Endothelial cell of umbilical vein (primary cell): ENCODE measurements at regions of chr5 and their contacts with region 1.

Region 1: DNA sequence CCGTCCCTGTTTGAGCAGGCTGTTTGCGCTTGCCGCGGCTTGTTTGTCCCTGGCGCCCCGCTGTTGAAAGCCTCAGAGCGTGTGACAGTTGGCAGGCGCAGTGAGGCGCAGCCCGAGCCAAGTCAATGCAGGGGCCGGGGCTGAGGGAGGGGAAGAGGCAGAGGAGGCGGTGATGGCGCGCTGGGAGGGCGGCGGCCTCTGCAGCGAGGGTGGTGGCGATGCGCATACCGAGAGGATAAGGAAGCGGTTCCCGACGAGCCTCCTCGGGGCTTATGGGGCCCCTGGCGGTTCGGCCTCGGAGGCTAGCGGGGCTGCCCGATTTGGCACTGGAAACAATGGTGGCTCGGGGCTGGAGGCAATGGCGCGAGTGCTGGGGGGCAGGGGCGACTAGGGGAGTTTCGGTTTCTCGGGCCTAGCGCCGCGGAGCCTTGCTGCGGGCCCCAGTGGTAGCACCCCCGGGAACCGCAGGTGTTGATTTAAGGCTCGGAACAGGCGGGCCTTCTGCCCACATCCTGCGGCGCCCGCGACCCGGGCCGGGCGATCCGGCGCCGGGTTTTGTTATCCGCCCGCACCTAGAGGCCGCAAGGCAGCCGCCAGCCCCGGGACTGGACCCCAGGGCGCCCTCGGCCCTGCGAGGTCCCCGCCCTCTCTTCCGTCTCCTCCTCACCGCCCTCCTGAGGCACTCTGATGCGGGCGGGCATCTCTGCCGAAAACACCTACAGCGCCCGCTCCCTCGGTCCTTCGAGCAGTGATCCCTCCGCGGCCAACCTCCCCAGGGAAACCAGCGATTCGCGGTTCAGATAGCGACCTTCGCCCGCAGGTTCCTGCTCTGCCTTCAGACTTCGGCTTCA is 947 bp upstream of the LNPEP start:
- DNase-seq: peak; percentile 94
- H3K4me3 ChIP-seq: peak overlapping the region; percentile 30 to 97 (median 85)
- H3K27ac ChIP-seq: peak overlapping the region; percentile 82
- H3K4me1 ChIP-seq: peaks cover 21% of the 10 kb centered on the region
- H3K27me3 ChIP-seq: no peaks in the 10 kb centered on the region
- CTCF ChIP-seq: no peak
- POLR2A ChIP-seq: peak; percentile 95

Region 2: GRCh38 chr5:96807075-96807654 is 127.8 kb before region 1 on chr5:
- CTCF ChIA-PET with region 1: no interaction called
- POLR2A ChIA-PET with region 1: no interaction called
- dilution Hi-C with region 1: no loop called
- intact Hi-C with region 1: loop called (anchors 1 kb)
- DNase-seq: peak; percentile 76
- H3K4me3 ChIP-seq: peak overlapping the region; percentile 22 to 83 (median 73)
- H3K27ac ChIP-seq: peak overlapping the region; percentile 88
- H3K4me1 ChIP-seq: peaks cover 9% of the 10 kb centered on the region
- H3K27me3 ChIP-seq: no peaks in the 10 kb centered on the region
- CTCF ChIP-seq: no peak
- POLR2A ChIP-seq: no peak

Region 3: GRCh38 chr5:96876292-96876850 is 58.6 kb before region 1 on chr5 and contains the start of gene ERAP2:
- CTCF ChIA-PET with region 1: interaction called, 3 read pairs
- POLR2A ChIA-PET with region 1: no interaction called
- dilution Hi-C with region 1: no loop called
- intact Hi-C with region 1: loop called (anchors 1 kb)
- DNase-seq: peak; percentile 85
- H3K4me3 ChIP-seq: peak within 1 kb of the TSS; percentile 51 to 98 (median 80)
- H3K27ac ChIP-seq: peak within 1 kb of the TSS; percentile 76
- H3K4me1 ChIP-seq: peaks cover 34% of the 10 kb centered on the region
- H3K27me3 ChIP-seq: no peaks in the 10 kb centered on the region
- CTCF ChIP-seq: no peak
- POLR2A ChIP-seq: peak; percentile 56
- total RNA-seq, gene ERAP2: 6.1 and 10.0 TPM in 2 replicates

Region 4: GRCh38 chr5:96913233-96913632 is 21.7 kb before region 1 on chr5:
- CTCF ChIA-PET with region 1: no interaction called
- POLR2A ChIA-PET with region 1: no interaction called
- dilution Hi-C with region 1: no loop called
- intact Hi-C with region 1: no loop called
- DNase-seq: no peak
- H3K4me3 ChIP-seq: no peak overlapping the region
- H3K27ac ChIP-seq: no peak overlapping the region
- H3K4me1 ChIP-seq: no peaks in the 10 kb centered on the region
- H3K27me3 ChIP-seq: no peaks in the 10 kb centered on the region
- CTCF ChIP-seq: no peak
- POLR2A ChIP-seq: no peak

Region 5: DNA sequence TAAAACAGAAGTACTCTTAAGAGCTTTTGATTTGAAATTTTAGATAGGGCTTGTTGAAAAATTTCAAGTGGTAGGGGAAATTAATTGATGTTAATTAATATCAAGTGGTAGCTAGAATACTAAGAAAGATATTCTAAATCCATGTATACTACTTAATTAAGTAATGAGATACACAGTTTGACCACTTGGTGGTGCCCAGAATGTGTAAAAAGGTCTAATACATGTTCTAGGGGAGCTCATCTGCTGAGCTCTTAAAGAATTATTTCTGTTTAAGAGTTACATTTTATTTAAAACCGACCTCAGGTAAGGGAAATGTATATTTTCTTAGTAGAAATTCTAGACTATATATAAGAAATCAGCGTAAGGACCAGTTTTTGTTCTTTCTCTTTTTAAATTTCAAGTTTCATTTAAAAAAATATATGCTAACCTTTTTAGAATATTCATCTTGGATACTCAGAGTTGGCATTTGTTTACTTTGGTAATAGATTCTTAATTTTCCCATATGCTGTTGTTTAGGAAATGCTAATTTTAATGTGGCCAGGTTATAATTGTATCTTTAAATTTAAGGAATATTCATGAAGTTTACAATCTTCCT is 62.4 kb after region 1 on chr5:
- CTCF ChIA-PET with region 1: interaction called, 15 read pairs
- POLR2A ChIA-PET with region 1: no interaction called
- dilution Hi-C with region 1: no loop called
- intact Hi-C with region 1: loop called (anchors 1 kb)
- DNase-seq: peak; percentile 66
- H3K4me3 ChIP-seq: no peak overlapping the region
- H3K27ac ChIP-seq: no peak overlapping the region
- H3K4me1 ChIP-seq: no peaks in the 10 kb centered on the region
- H3K27me3 ChIP-seq: no peaks in the 10 kb centered on the region
- CTCF ChIP-seq: peak; percentile 27 to 34
- POLR2A ChIP-seq: no peak

Region 6: DNA sequence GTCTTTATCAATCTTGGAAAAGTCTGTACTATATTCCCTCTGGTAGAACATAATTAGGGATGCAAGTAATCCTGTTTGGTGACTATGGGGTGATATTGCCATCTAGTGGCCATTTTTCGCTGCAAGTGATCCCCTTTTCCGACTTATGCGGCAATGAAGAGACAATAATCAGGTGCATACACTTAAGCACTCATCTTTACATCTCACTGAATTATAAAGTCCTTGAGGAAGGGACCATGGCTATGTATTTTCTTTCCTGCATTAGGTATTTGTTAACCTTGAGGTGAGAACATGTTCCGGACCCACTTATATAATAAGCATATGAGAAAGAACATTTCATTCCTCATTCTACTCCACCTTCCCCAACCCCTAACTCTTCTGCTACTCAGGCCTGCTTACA is 227.1 kb after region 1 on chr5:
- CTCF ChIA-PET with region 1: no interaction called
- POLR2A ChIA-PET with region 1: no interaction called
- dilution Hi-C with region 1: no loop called
- intact Hi-C with region 1: loop called (anchors 1 kb)
- DNase-seq: peak; percentile 86
- H3K4me3 ChIP-seq: no peak overlapping the region
- H3K27ac ChIP-seq: no peak overlapping the region
- H3K4me1 ChIP-seq: no peaks in the 10 kb centered on the region
- H3K27me3 ChIP-seq: no peaks in the 10 kb centered on the region
- CTCF ChIP-seq: peak; percentile 68 to 79
- POLR2A ChIP-seq: no peak